ENCODE measurements at regions of chr2 and their contacts with region 1.

Region 1: GRCh38 chr2:25201265-25201664 is 32.9 kb upstream of the POMC start:
- DNase-seq: no peak
- H3K4me3 Mint-ChIP-seq: no peak overlapping the region
- H3K27ac Mint-ChIP-seq: no peak overlapping the region
- H3K4me1 Mint-ChIP-seq: peaks cover 8% of the 10 kb centered on the region
- H3K27me3 Mint-ChIP-seq: peaks cover 12% of the 10 kb centered on the region

Region 2: DNA sequence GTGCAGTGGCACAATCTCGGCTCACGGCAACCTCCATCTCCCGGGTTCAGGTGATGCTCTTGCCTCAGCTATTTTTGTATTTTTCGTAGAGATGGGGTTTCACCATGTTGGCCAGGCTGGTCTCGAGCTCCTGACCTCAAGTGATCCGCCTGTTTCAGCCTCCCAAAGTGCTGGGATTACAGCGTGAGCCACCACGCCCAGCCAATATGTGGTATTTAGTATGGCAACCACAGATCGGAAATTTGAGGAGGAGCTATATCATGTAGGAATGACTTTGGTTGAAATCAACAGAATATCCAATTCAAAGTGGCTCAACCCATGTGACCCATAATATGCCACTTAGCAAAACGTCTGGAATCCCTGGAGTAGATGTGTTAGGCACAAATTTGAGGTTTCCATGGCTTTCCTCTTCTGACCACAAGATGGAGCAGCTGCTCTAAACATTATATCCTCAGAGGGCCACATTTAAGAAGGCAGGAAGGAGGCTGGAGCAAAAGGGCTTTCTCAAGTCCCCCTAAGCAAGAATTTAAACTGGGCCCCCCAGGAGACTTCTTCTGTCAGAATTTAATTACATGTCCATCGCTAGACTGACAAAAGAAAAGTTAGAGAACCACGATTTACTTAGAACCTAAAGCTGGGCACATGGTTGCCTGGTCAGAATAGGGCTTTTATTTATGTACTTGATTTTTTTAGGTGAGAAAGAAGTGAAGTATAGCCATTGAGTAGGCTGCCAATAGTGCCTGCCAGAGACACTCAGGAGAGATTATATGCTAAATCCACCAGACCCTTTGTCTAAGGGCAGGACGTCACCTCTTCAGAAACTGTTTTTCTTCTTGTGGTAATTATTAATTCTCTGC is 791.3 kb before region 1 on chr2:
- intact Hi-C with region 1: loop called (anchors 1 kb)
- DNase-seq: peak; percentile 24
- H3K4me3 Mint-ChIP-seq: no peak overlapping the region
- H3K27ac Mint-ChIP-seq: no peak overlapping the region
- H3K4me1 Mint-ChIP-seq: peaks cover 5% of the 10 kb centered on the region
- H3K27me3 Mint-ChIP-seq: peaks cover 2% of the 10 kb centered on the region

Region 3: GRCh38 chr2:25131567-25132298 is 69.5 kb before region 1 on chr2:
- intact Hi-C with region 1: loop called (anchors 1 kb)
- DNase-seq: no peak
- H3K4me3 Mint-ChIP-seq: peak overlapping the region; percentile 68
- H3K27ac Mint-ChIP-seq: no peak overlapping the region
- H3K4me1 Mint-ChIP-seq: peaks cover 10% of the 10 kb centered on the region
- H3K27me3 Mint-ChIP-seq: peaks cover 44% of the 10 kb centered on the region

Region 4: DNA sequence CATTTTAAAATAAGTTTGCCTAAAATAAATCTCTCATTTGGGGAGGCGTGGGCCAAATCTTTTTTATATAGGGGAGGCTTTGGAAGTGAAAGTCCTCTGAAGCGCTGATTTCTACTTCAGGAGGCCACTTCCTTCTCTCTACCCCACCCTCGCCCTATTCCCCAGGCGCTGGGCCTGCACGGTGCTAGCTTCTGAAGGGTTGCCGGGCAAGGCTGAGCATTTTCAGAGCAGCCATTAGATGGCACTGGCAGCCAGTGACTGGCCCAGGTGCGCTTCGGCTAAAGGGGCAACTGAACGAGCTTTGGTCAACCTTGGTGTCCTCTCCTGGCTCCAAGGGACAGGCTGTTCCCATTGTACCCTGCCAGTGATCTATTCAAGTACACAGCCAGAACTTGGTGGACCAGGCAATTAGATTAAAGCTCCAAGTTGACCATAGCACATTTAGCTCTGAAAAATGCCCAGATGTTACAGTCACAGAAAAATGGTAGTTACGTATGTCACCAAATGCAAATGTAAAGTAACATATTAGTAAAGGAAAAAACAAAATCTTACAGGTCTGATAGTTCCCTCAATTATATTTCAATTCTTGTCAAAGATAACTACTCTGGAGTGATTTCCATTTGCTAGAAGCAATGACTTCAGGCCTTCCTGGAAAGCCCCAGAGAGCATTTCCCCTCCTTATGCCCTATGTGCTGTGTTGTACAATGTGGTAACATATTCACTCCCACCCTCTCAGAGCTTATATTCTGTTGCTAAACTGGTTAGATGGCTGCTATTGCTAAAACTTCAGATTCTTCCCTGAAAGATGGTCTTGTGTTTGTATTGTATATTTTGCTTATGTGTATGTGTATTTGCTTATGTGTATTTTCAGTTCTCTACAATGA is 35.0 kb before region 1 on chr2:
- intact Hi-C with region 1: loop called (anchors 1 kb)
- DNase-seq: peak; percentile 23
- H3K4me3 Mint-ChIP-seq: peak overlapping the region; percentile 16
- H3K27ac Mint-ChIP-seq: no peak overlapping the region
- H3K4me1 Mint-ChIP-seq: peaks cover 18% of the 10 kb centered on the region
- H3K27me3 Mint-ChIP-seq: peaks cover 57% of the 10 kb centered on the region

Region 5: DNA sequence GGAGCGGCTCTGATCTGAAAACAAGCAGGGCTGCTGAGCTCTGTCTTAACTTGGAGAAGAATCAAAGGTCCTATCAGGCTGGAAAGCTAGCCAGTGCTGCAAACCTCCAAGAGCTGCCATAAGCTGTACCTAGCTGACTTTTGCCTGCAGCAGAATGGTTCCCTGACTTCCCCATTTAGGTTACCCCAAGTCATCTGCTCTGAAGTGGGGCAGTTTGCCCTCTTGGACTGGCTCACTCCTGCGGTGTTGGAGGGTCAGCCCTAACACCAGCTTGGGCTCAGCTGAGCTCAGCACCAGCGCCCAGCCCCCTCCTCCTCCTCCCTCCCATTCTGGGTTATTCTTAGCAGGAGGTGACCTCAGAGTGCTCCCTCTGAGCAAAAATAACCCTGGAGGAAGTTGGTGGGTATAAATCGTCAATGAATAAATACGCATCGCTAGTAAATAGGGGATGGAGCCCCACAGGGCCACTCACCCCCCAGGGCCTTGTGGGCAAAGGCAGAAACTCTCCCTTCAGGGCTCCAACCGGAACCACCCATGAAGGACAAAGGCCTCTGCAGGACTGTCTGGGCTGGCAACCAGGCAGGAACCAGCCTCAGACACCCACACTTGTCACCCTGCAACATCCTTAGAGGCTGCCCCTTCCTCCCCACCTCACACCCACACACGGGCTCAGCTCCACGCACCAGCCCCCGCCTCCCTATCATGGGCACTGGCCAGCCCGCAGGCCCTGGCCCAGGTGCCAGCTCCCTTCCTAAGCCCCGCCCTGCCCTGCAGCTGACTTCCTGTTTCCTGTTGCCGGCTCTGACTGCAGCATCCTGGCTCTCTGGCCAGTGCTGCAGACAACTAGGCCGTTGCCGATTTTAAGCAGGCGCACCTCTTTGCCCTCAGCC is 93.6 kb after region 1 on chr2:
- intact Hi-C with region 1: no loop called
- DNase-seq: peak; percentile 77
- H3K4me3 Mint-ChIP-seq: peak overlapping the region; percentile 62
- H3K27ac Mint-ChIP-seq: peak overlapping the region; percentile 90
- H3K4me1 Mint-ChIP-seq: peaks cover 44% of the 10 kb centered on the region
- H3K27me3 Mint-ChIP-seq: no peaks in the 10 kb centered on the region